ENCODE measurements at regions of chr22 and their contacts with region 1.

Region 1: DNA sequence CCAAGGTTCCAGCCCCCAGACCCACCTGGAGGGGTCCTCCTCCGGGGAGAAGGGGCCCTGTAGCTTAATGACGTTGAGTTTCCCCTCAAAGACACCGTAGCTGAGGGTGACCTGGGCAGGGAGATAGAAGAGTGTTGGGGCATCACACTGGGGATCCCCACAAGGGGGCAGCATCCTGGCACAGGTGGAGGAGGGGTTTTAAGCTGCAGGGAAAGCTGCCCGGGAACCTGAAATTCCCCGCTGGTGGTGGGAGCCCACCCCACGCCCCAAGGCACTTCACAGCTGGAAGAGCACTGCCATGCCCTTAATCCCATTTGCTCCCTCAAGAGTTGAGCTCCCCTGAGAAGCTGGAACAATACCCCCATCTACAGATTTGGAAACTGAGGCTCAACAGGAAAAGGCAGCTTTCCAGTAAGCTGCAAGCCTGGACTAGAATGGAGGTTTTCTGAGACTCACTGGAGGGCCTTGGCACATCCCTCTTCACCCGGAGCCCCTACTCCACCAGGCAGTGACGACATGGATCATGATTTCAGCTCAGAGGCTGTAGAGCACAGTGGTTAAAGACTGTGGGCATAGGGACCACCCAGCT is 13.7 kb downstream of the MFNG start:
- DNase-seq: no peak
- ATAC-seq: peak; percentile 74
- H3K4me3 ChIP-seq: no peak overlapping the region
- H3K27ac ChIP-seq: no peak overlapping the region
- H3K4me1 ChIP-seq: no peaks in the 10 kb centered on the region
- H3K27me3 ChIP-seq: no peaks in the 10 kb centered on the region
- CTCF ChIP-seq: peak; percentile 52 to 76 (median 60)
- EP300 ChIP-seq: no peak
- POLR2A ChIP-seq: no peak
- RAD21 ChIP-seq: 0 out of 2 replicates have a peak, but pooled peaks have one; percentile 23

Region 2: GRCh38 chr22:37428649-37429586 is 43.6 kb before region 1 on chr22:
- CTCF ChIA-PET with region 1: no interaction called
- POLR2A ChIA-PET with region 1: no interaction called
- RAD21 ChIA-PET with region 1: no interaction called
- SMC1A ChIA-PET with region 1: no interaction called
- in situ Hi-C with region 1: no loop called
- intact Hi-C with region 1: no loop called
- DNase-seq: no peak
- ATAC-seq: peak; percentile 87
- H3K4me3 ChIP-seq: no peak overlapping the region
- H3K27ac ChIP-seq: no peak overlapping the region
- H3K4me1 ChIP-seq: no peaks in the 10 kb centered on the region
- H3K27me3 ChIP-seq: peaks cover 11 to 15% of the 10 kb centered on the region in 2 experiments
- CTCF ChIP-seq: peak; percentile 75 to 81 (median 75)
- EP300 ChIP-seq: no peak
- POLR2A ChIP-seq: no peak
- RAD21 ChIP-seq: peak; percentile 56

Region 3: GRCh38 chr22:37457093-37457893 is 15.2 kb before region 1 on chr22:
- CTCF ChIA-PET with region 1: interaction called, 18 read pairs
- POLR2A ChIA-PET with region 1: no interaction called
- RAD21 ChIA-PET with region 1: no interaction called
- SMC1A ChIA-PET with region 1: interaction called, 3 read pairs
- in situ Hi-C with region 1: no loop called
- intact Hi-C with region 1: no loop called
- DNase-seq: peak; percentile 24
- ATAC-seq: peak; percentile 100
- H3K4me3 ChIP-seq: no peak overlapping the region
- H3K27ac ChIP-seq: no peak overlapping the region
- H3K4me1 ChIP-seq: no peaks in the 10 kb centered on the region
- H3K27me3 ChIP-seq: no peaks in the 10 kb centered on the region
- CTCF ChIP-seq: peak; percentile 88 to 98 (median 96)
- EP300 ChIP-seq: no peak
- POLR2A ChIP-seq: no peak
- RAD21 ChIP-seq: peak; percentile 97

Region 4: DNA sequence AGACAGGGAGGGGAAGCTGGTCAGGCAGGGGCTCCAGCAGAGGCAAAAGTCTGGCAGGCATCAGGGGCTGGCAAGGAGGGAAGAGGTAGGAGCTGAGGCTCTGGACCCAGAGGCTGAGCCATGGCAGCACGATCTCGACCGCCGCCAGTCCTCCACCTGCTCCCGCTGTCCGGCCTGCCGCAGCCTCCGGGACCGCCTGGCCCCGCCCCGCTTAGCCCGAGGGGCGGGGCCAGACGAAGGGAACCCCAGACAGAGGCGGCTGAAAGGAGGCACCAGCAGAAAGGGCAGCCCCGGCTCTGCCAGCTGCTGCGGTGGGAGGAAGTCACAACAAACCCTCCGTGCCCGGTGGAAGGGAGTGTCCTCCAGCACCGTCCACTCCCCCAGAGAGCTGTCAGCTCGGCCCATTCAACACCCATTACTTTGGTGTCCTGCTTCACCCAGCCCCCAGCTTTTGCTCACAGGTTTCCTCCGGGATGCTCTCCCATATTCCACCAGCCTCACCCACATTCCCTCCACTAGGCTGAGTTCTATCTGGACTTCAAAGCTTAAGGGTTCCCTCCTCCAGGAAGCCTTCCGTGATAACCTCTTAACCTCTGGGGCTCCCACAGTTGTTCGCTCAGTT is 13.8 kb after region 1 on chr22 and contains the start of gene MFNG:
- CTCF ChIA-PET with region 1: interaction called, 75 read pairs
- POLR2A ChIA-PET with region 1: no interaction called
- RAD21 ChIA-PET with region 1: interaction called, 3 read pairs
- SMC1A ChIA-PET with region 1: interaction called, 13 read pairs
- in situ Hi-C with region 1: no loop called
- intact Hi-C with region 1: no loop called
- DNase-seq: peak; percentile 26
- ATAC-seq: peak; percentile 79
- H3K4me3 ChIP-seq: peak within 1 kb of the TSS; percentile 94
- H3K27ac ChIP-seq: peak within 1 kb of the TSS; percentile 97
- H3K4me1 ChIP-seq: peaks cover 25% of the 10 kb centered on the region
- H3K27me3 ChIP-seq: no peaks in the 10 kb centered on the region
- CTCF ChIP-seq: no peak
- EP300 ChIP-seq: no peak
- POLR2A ChIP-seq: peak; percentile 78
- RAD21 ChIP-seq: no peak
- polyA plus RNA-seq, gene MFNG: 11.5 to 26.1 TPM

Region 5: DNA sequence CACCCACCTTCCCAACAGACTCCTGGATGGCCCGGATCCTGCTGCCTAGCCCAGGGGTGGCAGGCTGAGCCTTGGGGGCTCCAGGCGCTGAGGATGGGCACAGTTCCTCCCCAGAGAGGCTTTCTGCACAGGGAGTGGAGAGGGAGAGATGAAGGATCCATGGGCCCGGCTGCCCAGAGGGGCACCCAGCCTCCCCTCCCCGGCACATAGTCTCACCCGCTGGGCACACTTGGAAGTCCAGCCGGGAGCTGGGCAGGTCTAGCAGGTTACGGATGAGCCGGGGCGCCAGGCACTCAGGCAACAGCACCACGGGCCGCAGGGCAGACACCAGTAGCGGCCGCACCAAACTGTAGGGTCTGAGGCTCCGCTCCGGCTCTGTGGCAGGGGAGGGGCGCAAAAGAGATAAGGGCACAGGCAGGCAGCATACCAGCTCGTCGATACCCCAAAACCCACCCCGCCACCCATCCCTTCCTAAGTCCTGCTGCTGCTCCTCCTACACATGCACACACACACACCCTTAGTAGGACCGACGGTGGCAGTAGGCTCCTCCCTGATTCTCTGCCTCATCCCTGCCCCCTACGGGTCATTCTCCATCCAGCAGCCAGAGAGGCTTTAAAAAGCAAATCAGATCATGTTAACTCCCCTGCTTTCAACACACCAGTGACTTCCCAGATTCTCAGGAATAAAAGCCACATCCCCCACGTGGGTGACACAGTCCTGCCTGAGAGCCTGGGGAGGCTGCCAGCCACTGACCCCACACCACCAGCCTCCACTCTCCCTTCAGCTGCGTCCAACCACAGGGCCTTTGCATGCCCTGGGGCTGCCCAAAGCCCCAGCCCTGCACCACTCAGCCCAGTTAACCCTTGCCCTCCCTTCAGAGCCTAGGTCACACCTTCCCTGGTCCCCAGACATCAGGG is 20.2 kb after region 1 on chr22:
- CTCF ChIA-PET with region 1: interaction called, 75 read pairs
- POLR2A ChIA-PET with region 1: no interaction called
- RAD21 ChIA-PET with region 1: interaction called, 12 read pairs
- SMC1A ChIA-PET with region 1: interaction called, 6 read pairs
- in situ Hi-C with region 1: no loop called
- intact Hi-C with region 1: no loop called
- DNase-seq: no peak
- ATAC-seq: peak; percentile 92
- H3K4me3 ChIP-seq: no peak overlapping the region
- H3K27ac ChIP-seq: no peak overlapping the region
- H3K4me1 ChIP-seq: no peaks in the 10 kb centered on the region
- H3K27me3 ChIP-seq: no peaks in the 10 kb centered on the region; a peak in 1 of 4 replicates
- CTCF ChIP-seq: peak; percentile 57 to 67 (median 63)
- EP300 ChIP-seq: no peak
- POLR2A ChIP-seq: no peak
- RAD21 ChIP-seq: peak; percentile 30; the same call in 1 of the 2 replicates

Region 6: GRCh38 chr22:37498289-37498909 is 25.9 kb after region 1 on chr22:
- CTCF ChIA-PET with region 1: interaction called, 75 read pairs
- POLR2A ChIA-PET with region 1: no interaction called
- RAD21 ChIA-PET with region 1: interaction called, 12 read pairs
- SMC1A ChIA-PET with region 1: interaction called, 6 read pairs
- in situ Hi-C with region 1: no loop called
- intact Hi-C with region 1: no loop called
- DNase-seq: peak; percentile 15
- ATAC-seq: peak; percentile 97
- H3K4me3 ChIP-seq: no peak overlapping the region
- H3K27ac ChIP-seq: no peak overlapping the region
- H3K4me1 ChIP-seq: no peaks in the 10 kb centered on the region
- H3K27me3 ChIP-seq: peaks cover 0 to 3% of the 10 kb centered on the region in 2 experiments; a peak in 2 of 4 replicates
- CTCF ChIP-seq: peak; percentile 71 to 83 (median 71)
- EP300 ChIP-seq: no peak
- POLR2A ChIP-seq: no peak
- RAD21 ChIP-seq: peak; percentile 54

Region 7: GRCh38 chr22:37538590-37539357 is 66.3 kb after region 1 on chr22:
- CTCF ChIA-PET with region 1: interaction called, 12 read pairs
- POLR2A ChIA-PET with region 1: interaction called, 4 read pairs
- RAD21 ChIA-PET with region 1: no interaction called
- SMC1A ChIA-PET with region 1: interaction called, 6 read pairs
- in situ Hi-C with region 1: no loop called
- intact Hi-C with region 1: no loop called
- DNase-seq: peak; percentile 80
- ATAC-seq: peak; percentile 98
- H3K4me3 ChIP-seq: no peak overlapping the region
- H3K27ac ChIP-seq: no peak overlapping the region
- H3K4me1 ChIP-seq: peaks cover 27% of the 10 kb centered on the region
- H3K27me3 ChIP-seq: no peaks in the 10 kb centered on the region
- CTCF ChIP-seq: peak; percentile 96 to 99 (median 96)
- EP300 ChIP-seq: peak in 1 of 2 experiments; percentile 37; a peak in 1 of 4 replicates
- POLR2A ChIP-seq: no peak
- RAD21 ChIP-seq: peak; percentile 96

Region 8: DNA sequence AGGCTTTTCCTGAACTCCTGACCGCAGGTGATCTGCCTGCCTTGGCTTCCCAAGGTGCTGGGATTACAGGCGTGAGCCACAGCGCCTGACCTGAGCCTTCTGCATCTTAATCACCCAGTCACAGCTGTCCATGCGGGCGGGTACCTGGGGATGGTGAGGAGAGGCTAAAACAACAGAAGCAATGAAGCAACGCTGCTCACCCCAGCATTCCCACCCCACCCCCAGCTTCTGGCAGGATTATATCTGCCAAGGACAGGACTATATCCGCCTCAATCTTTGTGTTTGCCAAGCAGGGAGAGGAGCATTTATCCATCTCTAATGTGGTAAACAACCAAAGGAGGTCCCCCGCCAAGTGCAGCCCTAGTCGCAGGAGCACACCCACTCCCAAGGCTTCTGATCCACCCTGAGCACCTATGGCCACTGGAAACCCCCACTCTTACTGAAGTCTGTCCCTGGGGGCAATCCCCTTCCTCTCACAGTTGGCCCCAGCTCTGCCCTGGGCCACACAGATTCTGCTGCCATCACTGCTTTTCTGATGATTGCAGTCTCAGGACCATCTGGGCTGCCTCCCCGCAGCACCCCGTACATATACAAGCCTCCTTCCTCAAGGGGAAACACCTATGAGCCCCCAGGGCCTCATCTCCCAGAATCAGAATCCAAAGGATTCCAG is 116.2 kb after region 1 on chr22:
- CTCF ChIA-PET with region 1: interaction called, 17 read pairs
- POLR2A ChIA-PET with region 1: no interaction called
- RAD21 ChIA-PET with region 1: interaction called, 10 read pairs
- SMC1A ChIA-PET with region 1: interaction called, 4 read pairs
- in situ Hi-C with region 1: no loop called
- intact Hi-C with region 1: no loop called
- DNase-seq: no peak
- ATAC-seq: peak; percentile 56
- H3K4me3 ChIP-seq: no peak overlapping the region
- H3K27ac ChIP-seq: no peak overlapping the region
- H3K4me1 ChIP-seq: peaks cover 31% of the 10 kb centered on the region
- H3K27me3 ChIP-seq: no peaks in the 10 kb centered on the region
- CTCF ChIP-seq: no peak
- EP300 ChIP-seq: no peak
- POLR2A ChIP-seq: no peak
- RAD21 ChIP-seq: no peak

Measured in GM12878 (cell line).